Right ventricle myocardium superior (tissue), 1 donor: ENCODE measurements at regions of chr2 and their contacts with region 1.

Region 1: GRCh38 chr2:183696028-183696427 is 571.8 kb downstream of the NUP35 start:
- DNase-seq: no peak
- ATAC-seq: peak; percentile 58

Region 2: DNA sequence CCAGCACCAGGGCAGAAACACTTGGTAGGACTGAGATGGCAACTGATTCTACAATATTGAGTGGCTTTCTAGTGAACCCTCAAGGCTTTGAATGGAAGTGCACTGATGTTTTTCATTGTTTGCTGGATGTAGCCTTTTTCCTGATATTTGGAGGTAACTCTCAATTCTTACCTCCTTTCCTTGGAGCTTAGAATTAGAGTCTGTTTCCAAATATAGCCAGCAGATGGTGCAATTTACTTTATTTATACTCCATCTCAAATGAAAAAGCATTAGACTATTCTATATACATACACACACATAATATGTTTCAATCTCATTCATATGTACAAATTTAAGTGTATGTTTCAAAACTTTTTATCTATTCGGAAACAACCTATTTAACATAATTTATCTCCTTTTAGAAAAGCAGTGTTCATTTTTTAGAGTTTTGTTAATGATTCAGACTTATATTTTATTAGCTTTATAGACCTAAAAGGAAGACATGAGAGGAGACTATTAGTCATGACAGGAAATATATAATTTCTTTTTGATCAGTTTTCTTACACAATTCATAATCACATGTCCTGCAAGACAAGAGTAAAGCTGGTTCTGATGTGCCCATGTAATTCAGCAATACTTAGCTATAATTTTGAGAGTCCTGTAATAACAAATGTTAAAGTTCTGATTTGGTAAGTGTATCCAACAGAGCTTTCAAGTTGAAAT is 447.0 kb before region 1 on chr2:
- intact Hi-C with region 1: loop called (anchors 5 kb)
- DNase-seq: no peak
- ATAC-seq: peak; percentile 46